Naive thymus-derived CD8-positive, alpha-beta T cell (primary cell): ENCODE measurements at regions of chr2 and their contacts with region 1.

Region 1: DNA sequence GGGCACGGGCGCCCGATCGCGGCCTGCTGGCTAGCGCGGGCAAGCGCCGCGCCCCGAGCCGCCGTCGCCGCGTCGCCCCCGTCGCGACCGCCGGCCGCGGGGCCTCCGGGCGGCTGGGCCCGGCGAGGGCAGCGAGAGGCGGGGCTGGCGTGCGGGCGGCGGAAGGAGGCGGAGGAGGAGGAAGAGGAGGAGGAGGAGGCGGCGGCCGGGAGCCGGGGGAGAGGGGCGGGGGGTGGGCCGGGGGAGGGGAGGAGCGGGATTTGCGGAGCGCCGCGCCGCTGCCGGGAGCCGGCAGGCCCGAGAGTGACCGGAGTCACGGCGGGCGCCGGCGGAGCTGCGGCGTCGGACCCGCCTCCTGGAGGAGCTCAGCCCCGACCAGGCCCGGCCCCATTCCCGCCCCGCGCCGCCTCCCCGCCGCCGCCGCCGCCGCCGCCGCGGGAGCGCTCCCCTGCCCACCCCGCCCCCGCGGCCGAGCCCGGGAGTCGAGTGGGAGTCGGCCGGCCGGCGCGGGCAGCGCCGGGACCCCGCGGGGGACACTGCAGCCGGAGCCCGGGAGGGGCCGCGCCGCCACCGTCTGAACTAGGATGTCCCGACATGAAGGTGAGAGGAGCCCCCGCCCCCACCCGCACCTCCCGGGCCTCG is at the start of gene KCMF1:
- DNase-seq: peak; percentile 38 to 80 (median 64)
- ATAC-seq: peak; percentile 52 to 53
- H3K4me3 Mint-ChIP-seq: peak within 1 kb of the TSS; percentile 92 to 100 (median 99)
- H3K27ac Mint-ChIP-seq: peak within 1 kb of the TSS; percentile 97 to 100 (median 99)
- H3K4me1 Mint-ChIP-seq: peaks cover 28 to 67% (median 62%) of the 10 kb centered on the region in 4 donors
- H3K27me3 Mint-ChIP-seq: no peaks in the 10 kb centered on the region
- polyA plus RNA-seq, gene KCMF1: 13.3 to 30.2 (median 28.1) TPM

Region 2: DNA sequence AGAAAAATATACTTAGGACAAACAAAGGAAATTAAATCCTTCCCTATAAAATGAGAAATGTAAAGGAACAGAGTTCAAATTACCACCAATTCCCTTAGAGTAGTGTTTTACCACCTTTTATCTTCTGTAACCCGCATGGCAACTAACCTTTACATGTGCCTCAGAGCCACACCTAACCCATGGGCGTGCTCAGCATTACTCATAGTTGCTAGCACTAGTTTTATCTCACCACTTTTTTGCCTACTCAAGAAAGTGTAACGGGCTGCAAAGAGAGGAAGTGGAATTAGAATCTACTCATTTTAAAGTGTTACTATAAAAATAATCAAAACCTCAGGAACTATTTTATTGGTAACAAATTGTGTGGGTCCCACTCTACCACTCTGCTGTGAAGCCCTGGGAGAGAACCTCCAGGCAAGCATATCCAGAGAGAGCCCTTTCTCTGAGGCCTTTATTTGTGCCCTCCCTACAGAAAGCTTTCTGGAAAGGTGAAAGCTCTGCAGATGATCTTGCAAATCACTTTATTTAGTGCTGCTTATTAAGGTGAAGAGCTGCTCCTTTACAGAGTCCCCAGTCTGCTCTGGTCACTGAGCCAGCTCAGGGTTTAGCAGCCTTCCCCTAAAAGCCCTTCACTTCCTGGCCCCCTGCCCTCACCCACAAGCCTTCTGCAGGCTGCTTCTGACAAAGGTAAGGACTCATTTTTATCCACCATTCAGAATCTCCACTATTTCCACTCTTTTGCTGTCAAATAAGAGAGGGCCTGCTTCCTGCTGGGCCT is 188.9 kb before region 1 on chr2:
- POLR2A ChIA-PET with region 1: no interaction called
- DNase-seq: peak in 9 of 10 donors; percentile 19 to 84 (median 48)
- ATAC-seq: peak; percentile 74 to 89
- H3K4me3 Mint-ChIP-seq: peak overlapping the region; percentile 34 to 81 (median 59)
- H3K27ac Mint-ChIP-seq: peak overlapping the region; percentile 82 to 96 (median 92)
- H3K4me1 Mint-ChIP-seq: peaks cover 36 to 87% (median 82%) of the 10 kb centered on the region in 4 donors
- H3K27me3 Mint-ChIP-seq: no peaks in the 10 kb centered on the region

Region 3: GRCh38 chr2:84939426-84940087 is 31.4 kb before region 1 on chr2:
- POLR2A ChIA-PET with region 1: interaction called, 39 read pairs
- DNase-seq: peak; percentile 22 to 82 (median 61)
- ATAC-seq: peak; percentile 90
- H3K4me3 Mint-ChIP-seq: peak overlapping the region; percentile 62 to 90 (median 82)
- H3K27ac Mint-ChIP-seq: peak overlapping the region; percentile 90 to 99 (median 98)
- H3K4me1 Mint-ChIP-seq: peaks cover 10 to 56% (median 28%) of the 10 kb centered on the region in 4 donors
- H3K27me3 Mint-ChIP-seq: no peaks in the 10 kb centered on the region

Region 4: DNA sequence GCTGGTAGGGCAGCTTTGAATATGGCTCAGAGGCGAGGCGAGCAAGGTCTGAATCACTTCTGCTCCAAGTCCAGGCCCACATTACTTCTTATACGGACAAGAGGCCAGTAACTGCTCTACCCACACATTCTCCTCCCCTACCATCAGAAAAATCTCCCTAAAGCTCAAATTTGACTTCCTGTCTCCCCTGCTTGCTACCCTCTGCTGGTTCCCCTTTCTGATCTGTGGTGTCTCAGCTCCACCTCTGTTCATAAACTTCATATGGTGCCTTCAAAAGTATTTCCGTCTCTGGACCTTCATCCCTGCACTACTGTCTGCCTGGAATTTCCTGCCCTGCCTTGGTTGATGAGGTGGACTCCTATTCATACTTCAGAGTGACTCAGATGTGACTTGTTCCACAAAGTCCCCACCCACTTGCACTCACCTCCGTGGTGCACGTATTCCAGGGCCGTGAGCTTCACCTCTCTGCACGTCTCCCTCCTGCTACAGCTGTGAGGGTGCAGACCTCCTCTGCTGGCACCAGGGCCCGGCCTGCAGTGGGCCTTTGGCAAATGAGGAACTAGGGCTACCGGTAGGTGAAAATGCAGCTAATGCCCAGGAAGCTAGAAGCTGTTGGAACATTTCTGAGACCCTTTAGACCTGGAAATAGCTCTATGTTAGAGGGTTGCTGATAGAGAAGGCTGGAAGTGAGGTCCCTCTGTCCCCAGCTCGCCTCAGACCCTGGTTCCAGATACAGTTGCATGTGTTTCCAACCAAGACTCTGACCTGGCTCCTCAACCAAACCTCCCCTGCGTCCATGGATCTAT is 24.6 kb before region 1 on chr2:
- POLR2A ChIA-PET with region 1: interaction called, 39 read pairs
- DNase-seq: peak in 9 of 10 donors; percentile 16 to 64 (median 32)
- ATAC-seq: peak; percentile 85 to 87
- H3K4me3 Mint-ChIP-seq: peak overlapping the region; percentile 62 to 82 (median 74)
- H3K27ac Mint-ChIP-seq: peak overlapping the region; percentile 66 to 95 (median 88)
- H3K4me1 Mint-ChIP-seq: peaks cover 20 to 41% (median 33%) of the 10 kb centered on the region in 4 donors
- H3K27me3 Mint-ChIP-seq: no peaks in the 10 kb centered on the region

Region 5: DNA sequence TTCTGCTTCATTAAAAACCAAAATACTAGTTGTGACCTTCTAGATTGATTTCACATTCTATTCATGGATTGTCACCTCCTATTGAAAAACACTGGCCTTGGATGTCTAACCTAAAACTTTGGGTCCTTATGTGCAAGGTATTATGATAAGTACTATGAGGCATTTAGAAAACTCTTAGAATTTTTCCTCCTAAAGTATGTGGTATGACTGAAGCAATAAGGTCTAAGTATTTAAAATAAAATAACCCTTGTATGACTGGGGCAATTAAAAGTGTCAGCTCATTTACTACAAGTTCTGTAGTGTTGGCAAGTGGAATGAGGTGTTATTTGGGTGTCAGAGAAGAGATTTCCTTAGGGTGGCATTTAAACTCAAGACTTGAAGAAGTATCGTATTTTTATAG is 15.0 kb after region 1 on chr2:
- POLR2A ChIA-PET with region 1: interaction called, 13 read pairs
- DNase-seq: no peak
- ATAC-seq: no peak
- H3K4me3 Mint-ChIP-seq: peak overlapping the region in 8 of 10 donors; percentile 15 to 64 (median 50)
- H3K27ac Mint-ChIP-seq: peak overlapping the region in 4 of 10 donors; percentile 46 to 74 (median 50)
- H3K4me1 Mint-ChIP-seq: peaks cover 29 to 53% (median 38%) of the 10 kb centered on the region in 4 donors
- H3K27me3 Mint-ChIP-seq: no peaks in the 10 kb centered on the region